Activated CD4-positive, alpha-beta T cell treated with anti-CD3 and anti-CD28 coated beads, Interleukin-2, amount 10 ng/mL, durations not matched to agents 24 days and 14 days (primary cell): ENCODE measurements at regions of chr2 and their contacts with region 1.

Region 1: DNA sequence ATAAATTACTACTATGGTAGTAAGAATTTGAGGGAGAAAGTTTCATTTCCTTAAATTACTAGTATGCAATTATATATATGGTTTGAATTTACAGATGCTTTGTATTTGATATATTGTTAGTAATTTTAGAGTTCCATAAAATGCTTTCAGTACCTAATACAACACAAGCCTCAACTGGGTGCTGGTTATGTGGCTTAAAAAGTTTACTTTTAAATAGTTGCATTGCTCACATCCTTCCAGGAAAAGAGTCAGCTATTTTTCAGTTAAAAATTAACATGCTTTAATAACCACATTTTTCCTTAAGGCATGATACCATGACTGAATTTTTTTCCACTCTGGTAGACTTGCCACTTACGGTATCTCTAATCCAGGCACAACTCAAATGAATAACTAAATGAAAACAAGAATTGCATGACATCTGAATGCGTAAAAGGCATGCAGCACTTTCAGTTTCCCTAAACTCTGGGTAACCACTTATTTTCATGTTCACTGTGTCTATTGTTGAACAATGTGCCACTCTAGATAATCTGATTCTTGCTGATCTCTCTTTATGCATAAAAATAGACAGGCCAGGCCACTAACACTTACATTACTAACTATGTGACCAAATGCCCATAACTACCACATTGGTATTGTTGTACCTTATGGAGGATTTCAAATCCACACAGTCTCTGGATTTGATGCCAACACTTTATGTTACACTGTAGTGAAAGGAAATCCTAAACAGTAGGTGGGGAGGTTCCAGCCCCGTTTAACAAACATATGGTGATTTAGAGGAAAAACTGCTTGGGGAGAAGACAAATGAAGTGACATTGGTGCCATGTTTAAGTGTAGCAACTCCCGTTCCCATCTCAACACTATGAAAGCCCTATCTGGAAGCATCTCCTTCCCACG is 35.5 kb upstream of the SLC35F5 start:
- DNase-seq: peak; percentile 71
- H3K4me3 Mint-ChIP-seq: peak overlapping the region; percentile 62
- H3K27ac Mint-ChIP-seq: peak overlapping the region; percentile 93
- H3K4me1 Mint-ChIP-seq: peaks cover 23% of the 10 kb centered on the region
- H3K27me3 Mint-ChIP-seq: no peaks in the 10 kb centered on the region

Region 2: DNA sequence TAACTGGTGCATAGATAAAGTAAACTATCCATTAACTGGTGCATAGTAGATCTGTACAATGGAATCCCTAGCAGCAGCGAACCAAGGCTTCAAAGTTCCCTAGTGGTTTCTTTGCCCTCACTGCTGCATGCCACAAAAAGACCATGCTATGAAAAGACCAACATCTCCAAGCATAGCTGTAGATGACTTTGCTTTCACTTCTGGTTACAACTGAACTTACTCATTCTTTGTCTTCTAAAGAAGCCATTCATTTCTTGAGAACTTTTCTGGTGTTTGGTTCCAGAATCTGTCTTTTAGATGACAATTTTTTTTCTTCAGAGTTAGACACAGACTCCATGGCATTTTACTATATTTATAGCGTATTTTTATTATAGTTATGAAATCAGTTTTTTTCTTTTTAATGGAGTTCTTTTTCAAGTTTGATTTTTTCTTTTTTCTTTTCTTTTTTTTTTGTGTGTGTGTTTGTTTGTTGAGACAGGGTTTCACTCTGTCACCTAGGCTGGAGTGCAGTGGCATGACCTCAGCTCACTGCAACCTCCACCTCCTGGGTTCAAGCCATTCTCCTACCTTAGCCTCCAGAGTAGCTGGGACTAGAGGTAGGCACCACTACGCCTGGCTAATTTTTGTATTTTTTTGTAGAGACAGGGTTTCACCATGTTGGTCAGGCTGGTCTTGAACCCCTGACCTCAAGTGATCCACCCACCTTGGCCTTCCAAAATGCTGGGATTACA is 99.1 kb before region 1 on chr2:
- intact Hi-C with region 1: loop called (anchors 1 kb)
- DNase-seq: peak; percentile 83
- H3K4me3 Mint-ChIP-seq: peak overlapping the region; percentile 82
- H3K27ac Mint-ChIP-seq: peak overlapping the region; percentile 99
- H3K4me1 Mint-ChIP-seq: peaks cover 36% of the 10 kb centered on the region
- H3K27me3 Mint-ChIP-seq: peaks cover 2% of the 10 kb centered on the region

Region 3: DNA sequence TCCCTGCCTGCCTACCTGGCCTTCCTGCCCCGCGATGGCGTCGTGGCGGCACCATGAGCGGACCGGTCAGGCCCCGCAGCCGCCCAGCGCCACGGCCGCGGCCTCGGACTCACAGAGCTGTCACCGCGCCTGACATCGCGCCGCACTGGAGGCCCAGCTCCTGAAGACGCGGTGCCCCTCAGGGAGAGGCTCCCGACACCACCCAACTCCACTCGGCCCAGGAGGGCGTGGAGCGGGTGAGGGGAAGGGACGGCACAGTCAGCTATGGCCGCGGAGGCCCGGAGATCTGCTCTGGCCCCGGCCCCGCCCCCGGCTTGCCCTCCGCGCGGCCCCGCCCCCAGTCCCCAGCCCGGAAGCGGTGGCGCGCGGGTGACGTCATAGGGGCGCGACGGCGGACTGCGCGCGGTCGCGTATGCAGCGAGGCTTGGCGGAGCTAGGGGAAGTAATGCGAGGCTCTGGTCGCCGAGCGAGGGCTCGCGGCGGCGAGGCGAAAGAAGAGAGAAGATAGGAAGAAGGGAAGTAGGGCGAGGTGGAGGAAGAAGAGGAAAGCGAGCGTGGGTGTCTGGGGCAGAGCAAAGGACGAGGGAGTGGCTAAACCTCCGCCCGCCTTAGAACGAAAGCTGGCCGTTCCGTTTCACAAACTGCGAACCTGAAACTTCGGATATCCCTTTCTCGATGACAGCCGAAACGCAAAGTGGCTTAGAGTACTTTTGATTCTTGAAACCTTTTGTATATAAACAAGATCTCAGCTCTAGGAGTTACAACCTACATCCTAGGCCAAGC is 35.4 kb before region 1 on chr2 and contains the start of gene SLC35F5:
- intact Hi-C with region 1: loop called (anchors 1 kb)
- DNase-seq: peak; percentile 99
- H3K4me3 Mint-ChIP-seq: peak within 1 kb of the TSS; percentile 93
- H3K27ac Mint-ChIP-seq: peak within 1 kb of the TSS; percentile 100
- H3K4me1 Mint-ChIP-seq: peaks cover 21% of the 10 kb centered on the region
- H3K27me3 Mint-ChIP-seq: no peaks in the 10 kb centered on the region
- total RNA-seq, gene SLC35F5: 24.1 and 25.1 TPM in 2 replicates

Region 4: DNA sequence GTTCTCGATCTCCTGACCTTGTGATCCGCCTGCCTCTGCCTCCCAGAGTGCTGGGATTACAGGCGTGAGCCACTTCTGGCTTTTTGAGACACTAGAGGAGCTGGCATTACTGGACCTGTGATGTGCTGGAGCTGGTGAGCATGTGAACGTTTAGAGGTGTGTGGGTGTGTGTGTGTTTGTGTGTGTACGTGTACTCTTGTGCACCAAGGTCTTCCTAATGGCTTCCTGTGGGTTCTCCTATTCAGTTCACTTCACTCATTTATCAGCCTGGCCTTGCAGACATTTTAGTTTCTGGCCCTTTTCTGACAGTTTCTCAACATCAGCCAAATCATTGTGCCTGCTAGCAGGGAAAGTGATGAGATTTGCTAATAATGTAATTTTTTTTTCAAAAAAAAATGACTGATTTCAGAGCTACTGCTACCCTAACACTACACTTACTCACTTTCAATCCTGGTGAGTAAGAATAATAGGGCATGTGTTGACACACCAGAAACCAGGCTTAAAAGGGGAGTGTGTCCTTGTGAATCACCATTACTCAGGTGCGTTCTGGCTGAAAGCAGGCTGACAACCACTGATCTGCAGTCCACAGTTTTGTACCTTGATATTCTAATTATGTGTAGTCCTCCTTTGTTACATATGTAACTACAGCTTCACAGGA is 56.9 kb after region 1 on chr2:
- intact Hi-C with region 1: loop called (anchors 2 kb)
- DNase-seq: no peak
- H3K4me3 Mint-ChIP-seq: no peak overlapping the region
- H3K27ac Mint-ChIP-seq: peak overlapping the region; percentile 57
- H3K4me1 Mint-ChIP-seq: peaks cover 7% of the 10 kb centered on the region
- H3K27me3 Mint-ChIP-seq: no peaks in the 10 kb centered on the region

Region 5: GRCh38 chr2:113901943-113902342 is 110.0 kb after region 1 on chr2:
- intact Hi-C with region 1: no loop called
- DNase-seq: no peak
- H3K4me3 Mint-ChIP-seq: peak overlapping the region; percentile 22
- H3K27ac Mint-ChIP-seq: peak overlapping the region; percentile 64
- H3K4me1 Mint-ChIP-seq: peaks cover 77% of the 10 kb centered on the region
- H3K27me3 Mint-ChIP-seq: no peaks in the 10 kb centered on the region